ENCODE measurements at regions of chr4 and their contacts with region 1.

Region 1: DNA sequence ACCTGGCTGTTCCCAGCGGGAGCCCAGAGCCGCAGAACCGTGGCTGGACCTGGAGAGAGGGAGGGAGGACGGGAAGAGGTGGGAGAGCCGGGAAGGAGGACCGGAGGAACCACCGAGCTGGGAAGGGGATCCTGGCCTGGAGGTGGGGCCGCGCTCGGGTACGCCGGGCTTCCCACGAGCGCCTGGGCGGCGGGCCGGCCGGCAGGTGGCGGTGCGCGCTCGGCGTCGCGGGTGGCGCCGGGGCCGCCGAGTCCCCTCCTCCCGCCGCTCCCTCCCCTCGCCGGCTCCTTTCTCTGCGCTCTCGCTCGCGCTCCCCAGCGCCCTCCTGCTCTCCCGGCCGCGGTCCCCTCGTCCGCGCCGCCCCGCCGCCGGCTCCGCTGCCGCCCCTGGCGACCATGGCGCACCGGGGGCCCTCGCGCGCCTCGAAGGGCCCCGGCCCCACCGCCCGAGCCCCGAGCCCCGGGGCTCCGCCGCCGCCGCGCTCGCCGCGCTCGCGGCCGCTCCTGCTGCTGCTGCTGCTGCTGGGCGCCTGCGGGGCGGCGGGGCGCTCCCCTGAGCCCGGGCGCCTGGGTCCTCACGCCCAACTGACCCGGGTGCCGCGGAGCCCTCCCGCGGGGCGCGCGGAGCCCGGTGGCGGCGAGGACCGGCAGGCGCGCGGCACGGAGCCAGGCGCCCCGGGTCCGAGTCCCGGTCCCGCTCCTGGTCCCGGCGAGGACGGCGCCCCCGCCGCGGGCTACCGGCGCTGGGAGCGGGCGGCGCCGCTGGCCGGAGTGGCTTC is at the start of gene SORCS2:
- DNase-seq: peak; percentile 25
- H3K4me3 ChIP-seq: no peak within 1 kb of the TSS
- H3K27ac ChIP-seq: no peak within 1 kb of the TSS
- H3K4me1 ChIP-seq: no peaks in the 10 kb centered on the region
- H3K27me3 ChIP-seq: peaks cover 42 to 46% of the 10 kb centered on the region in 2 experiments
- CTCF ChIP-seq: peak; percentile 58 to 59
- POLR2A ChIP-seq: no peak
- total RNA-seq, gene SORCS2: 0.14 TPM in 1 of 2 replicates, not detected in the other

Region 2: DNA sequence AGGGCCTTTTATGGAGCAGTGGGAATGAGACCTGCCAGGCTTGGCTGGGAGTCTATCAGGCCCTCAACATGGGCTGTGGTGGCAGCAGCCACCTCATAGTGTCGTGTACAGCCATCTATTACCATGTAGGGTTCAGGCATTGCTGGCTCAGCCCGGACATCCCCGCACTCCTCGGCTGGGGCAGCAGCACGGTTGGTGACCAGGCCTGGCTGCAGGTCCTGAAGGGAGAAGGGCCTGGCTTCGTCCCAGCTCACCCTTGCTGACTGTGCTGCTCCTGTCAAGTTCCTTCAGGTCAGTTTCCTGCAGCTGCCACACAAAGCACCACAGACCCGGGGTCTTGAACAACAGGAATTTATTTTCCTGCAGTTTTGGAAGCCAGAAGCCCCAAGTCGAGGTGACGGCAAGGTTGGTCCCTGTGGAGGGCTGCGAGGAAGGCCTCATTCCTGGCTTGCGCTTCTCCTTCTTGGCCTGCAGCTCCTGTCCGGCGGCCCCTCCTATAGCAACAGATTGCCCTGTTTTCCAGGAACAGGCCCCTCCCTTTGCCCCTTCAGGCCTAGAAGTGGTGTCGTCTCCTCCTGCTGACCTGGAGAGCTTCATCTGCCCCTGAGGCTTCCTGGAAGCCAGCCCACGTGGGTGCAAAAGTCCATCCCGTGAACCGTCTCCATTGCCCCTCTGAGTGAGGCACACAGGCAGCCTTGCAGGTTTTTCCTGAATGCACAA is 25.3 kb before region 1 on chr4:
- CTCF ChIA-PET with region 1: no interaction called
- POLR2A ChIA-PET with region 1: no interaction called
- dilution Hi-C with region 1: no loop called
- intact Hi-C with region 1: no loop called
- DNase-seq: no peak
- H3K4me3 ChIP-seq: no peak overlapping the region
- H3K27ac ChIP-seq: no peak overlapping the region
- H3K4me1 ChIP-seq: no peaks in the 10 kb centered on the region
- H3K27me3 ChIP-seq: peaks cover 0 to 2% of the 10 kb centered on the region in 2 experiments
- CTCF ChIP-seq: no peak
- POLR2A ChIP-seq: no peak

Region 3: GRCh38 chr4:7206911-7207567 is 14.6 kb after region 1 on chr4:
- CTCF ChIA-PET with region 1: interaction called, 26 read pairs
- POLR2A ChIA-PET with region 1: no interaction called
- dilution Hi-C with region 1: no loop called
- intact Hi-C with region 1: no loop called
- DNase-seq: peak; percentile 72
- H3K4me3 ChIP-seq: no peak overlapping the region
- H3K27ac ChIP-seq: no peak overlapping the region
- H3K4me1 ChIP-seq: peaks cover 19% of the 10 kb centered on the region
- H3K27me3 ChIP-seq: no peaks in the 10 kb centered on the region
- CTCF ChIP-seq: no peak
- POLR2A ChIP-seq: no peak

Region 4: GRCh38 chr4:7295911-7296660 is 103.6 kb after region 1 on chr4:
- CTCF ChIA-PET with region 1: interaction called, 15 read pairs
- POLR2A ChIA-PET with region 1: no interaction called
- dilution Hi-C with region 1: no loop called
- intact Hi-C with region 1: loop called (anchors 1 kb)
- DNase-seq: no peak
- H3K4me3 ChIP-seq: no peak overlapping the region
- H3K27ac ChIP-seq: no peak overlapping the region
- H3K4me1 ChIP-seq: no peaks in the 10 kb centered on the region
- H3K27me3 ChIP-seq: no peaks in the 10 kb centered on the region
- CTCF ChIP-seq: peak; percentile 21 to 29
- POLR2A ChIP-seq: no peak

Region 5: GRCh38 chr4:7335344-7336069 is 143.1 kb after region 1 on chr4:
- CTCF ChIA-PET with region 1: interaction called, 31 read pairs
- POLR2A ChIA-PET with region 1: no interaction called
- dilution Hi-C with region 1: no loop called
- intact Hi-C with region 1: loop called (anchors 1 kb)
- DNase-seq: peak; percentile 27
- H3K4me3 ChIP-seq: no peak overlapping the region
- H3K27ac ChIP-seq: no peak overlapping the region
- H3K4me1 ChIP-seq: no peaks in the 10 kb centered on the region
- H3K27me3 ChIP-seq: no peaks in the 10 kb centered on the region
- CTCF ChIP-seq: peak; percentile 70 to 82
- POLR2A ChIP-seq: no peak

Region 6: GRCh38 chr4:7719354-7720174 is 527.1 kb after region 1 on chr4:
- CTCF ChIA-PET with region 1: interaction called, 37 read pairs
- POLR2A ChIA-PET with region 1: no interaction called
- dilution Hi-C with region 1: no loop called
- intact Hi-C with region 1: loop called (anchors 1 kb)
- DNase-seq: peak; percentile 24
- H3K4me3 ChIP-seq: no peak overlapping the region
- H3K27ac ChIP-seq: no peak overlapping the region
- H3K4me1 ChIP-seq: peaks cover 10% of the 10 kb centered on the region
- H3K27me3 ChIP-seq: peaks cover 0 to 1% of the 10 kb centered on the region in 2 experiments
- CTCF ChIP-seq: peak; percentile 75 to 83
- POLR2A ChIP-seq: no peak

Region 7: DNA sequence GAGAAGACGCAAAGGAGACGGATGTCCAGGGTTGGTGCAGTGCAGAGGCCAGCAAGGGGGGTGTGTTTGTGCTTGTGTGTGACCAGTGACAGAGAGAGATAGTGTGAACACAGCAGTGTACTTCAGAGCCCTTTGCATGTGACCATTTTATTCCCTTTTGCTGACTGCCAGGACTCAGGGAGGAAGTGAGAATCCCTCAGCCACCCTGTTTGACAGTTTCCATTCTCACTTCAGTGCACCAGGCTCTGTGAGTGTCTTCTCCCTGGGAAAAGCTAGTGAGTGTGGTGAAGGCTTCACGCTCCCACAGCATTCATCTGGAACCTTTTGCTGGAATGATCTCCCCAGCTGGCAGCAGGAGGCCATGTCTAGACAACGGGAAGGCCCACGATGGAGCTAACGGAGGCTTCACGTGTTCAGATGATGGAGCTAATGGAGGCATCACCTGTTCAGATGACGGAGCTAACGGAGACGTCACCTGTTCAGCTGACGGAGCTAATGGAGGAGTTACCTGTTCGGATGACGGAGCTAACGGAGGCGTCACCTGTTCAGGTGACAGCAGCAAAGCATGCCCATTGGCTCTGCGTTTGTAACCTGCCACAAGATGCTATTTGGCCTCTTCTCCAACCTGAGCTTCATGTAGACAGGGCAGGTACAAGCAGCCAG is 551.8 kb after region 1 on chr4:
- CTCF ChIA-PET with region 1: no interaction called
- POLR2A ChIA-PET with region 1: no interaction called
- dilution Hi-C with region 1: no loop called
- intact Hi-C with region 1: no loop called
- DNase-seq: no peak
- H3K4me3 ChIP-seq: no peak overlapping the region
- H3K27ac ChIP-seq: no peak overlapping the region
- H3K4me1 ChIP-seq: no peaks in the 10 kb centered on the region
- H3K27me3 ChIP-seq: no peaks in the 10 kb centered on the region
- CTCF ChIP-seq: no peak
- POLR2A ChIP-seq: no peak